Psoas muscle (tissue), 8 donors: ENCODE measurements at regions of chr2 and their contacts with region 1.

Region 1: GRCh38 chr2:232438951-232439757 is 16.8 kb upstream of the ALPI start:
- DNase-seq: peak in 1 of 2 donors; percentile 52
- ATAC-seq: peak; percentile 50 to 71 (median 56)
- H3K4me3 ChIP-seq: no peak overlapping the region
- H3K27ac ChIP-seq: no peak overlapping the region
- H3K4me1 ChIP-seq: peaks cover 4% of the 10 kb centered on the region
- H3K27me3 ChIP-seq: no peaks in the 10 kb centered on the region
- CTCF ChIP-seq: peak; percentile 60

Region 2: DNA sequence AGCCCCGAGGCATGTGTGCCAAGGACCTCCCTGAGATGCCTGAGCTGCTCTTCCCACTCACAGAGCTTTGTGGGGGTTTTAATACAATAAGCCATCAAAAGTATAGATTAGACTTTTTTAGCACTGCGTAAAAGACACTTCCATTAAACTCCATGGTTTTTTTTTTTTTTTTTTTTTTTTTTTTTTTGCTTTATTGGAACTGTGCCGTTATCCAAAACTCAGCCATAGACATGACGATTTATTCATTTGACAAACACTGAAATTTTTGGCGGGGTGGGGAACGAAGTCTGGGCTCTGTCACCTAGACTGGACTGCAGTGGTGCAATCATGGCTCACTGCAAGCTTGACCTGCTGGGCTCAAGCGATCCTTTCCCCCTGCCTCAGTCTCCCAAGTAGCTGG is 531.4 kb before region 1 on chr2:
- intact Hi-C with region 1: loop called (anchors 2 to 5 kb)
- DNase-seq: no peak
- ATAC-seq: no peak
- H3K4me3 ChIP-seq: no peak overlapping the region
- H3K27ac ChIP-seq: no peak overlapping the region
- H3K4me1 ChIP-seq: no peaks in the 10 kb centered on the region
- H3K27me3 ChIP-seq: no peaks in the 10 kb centered on the region
- CTCF ChIP-seq: no peak

Region 3: GRCh38 chr2:232333361-232334270 is 105.5 kb before region 1 on chr2:
- intact Hi-C with region 1: loop called (anchors 5 to 10 kb)
- DNase-seq: peak in 1 of 2 donors; percentile 50
- ATAC-seq: no peak
- H3K4me3 ChIP-seq: no peak overlapping the region
- H3K27ac ChIP-seq: no peak overlapping the region
- H3K4me1 ChIP-seq: no peaks in the 10 kb centered on the region
- H3K27me3 ChIP-seq: no peaks in the 10 kb centered on the region
- CTCF ChIP-seq: no peak

Region 4: GRCh38 chr2:232588680-232589585 is 149.8 kb after region 1 on chr2:
- intact Hi-C with region 1: no loop called
- DNase-seq: peak; percentile 43 to 66
- ATAC-seq: peak; percentile 28 to 67 (median 54)
- H3K4me3 ChIP-seq: no peak overlapping the region
- H3K27ac ChIP-seq: peak overlapping the region; percentile 54
- H3K4me1 ChIP-seq: peaks cover 33% of the 10 kb centered on the region
- H3K27me3 ChIP-seq: no peaks in the 10 kb centered on the region
- CTCF ChIP-seq: no peak